A673 (cell line): ENCODE measurements at regions of chr10 and their contacts with region 1.

Region 1: DNA sequence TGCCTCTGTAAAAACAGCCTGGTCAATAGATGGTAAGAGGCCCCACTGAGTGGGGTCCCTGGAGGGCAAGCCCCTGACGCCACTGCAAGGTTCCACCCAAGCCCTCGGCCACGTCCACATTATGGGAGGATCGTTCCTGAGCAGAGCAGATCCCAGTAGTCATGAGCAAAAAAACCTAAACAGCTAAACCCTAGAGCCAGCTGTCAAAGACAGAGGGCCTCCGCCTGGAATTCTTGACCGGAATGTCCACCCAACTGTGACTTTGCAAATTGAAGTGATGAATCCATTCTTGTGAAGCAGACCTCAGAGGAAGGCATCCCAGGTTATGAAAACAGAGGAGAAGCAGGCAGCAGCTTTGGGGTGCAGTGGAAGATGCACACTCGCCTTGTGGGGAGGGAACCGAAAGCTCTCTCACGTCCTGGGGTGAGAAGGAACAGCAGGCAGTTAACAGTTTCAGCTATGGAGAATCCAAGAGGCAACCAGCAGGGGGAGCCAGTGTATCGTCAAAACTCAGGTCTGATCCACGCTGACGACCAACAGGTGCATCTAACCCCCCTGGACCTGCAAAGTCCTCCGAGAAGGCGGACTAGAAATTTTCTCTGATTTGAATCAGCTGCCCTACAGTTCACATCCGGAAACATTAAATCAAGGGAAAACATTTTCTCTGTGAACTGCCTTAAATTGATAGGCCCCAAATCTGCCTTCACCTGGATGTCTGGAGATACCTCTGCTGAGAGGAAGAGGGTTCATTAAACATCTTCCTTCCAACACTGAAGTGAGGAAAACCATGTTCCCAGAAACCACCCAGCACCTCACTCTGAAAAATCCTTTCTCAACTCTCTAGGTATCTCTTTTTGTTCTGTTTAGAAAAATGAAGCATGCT is 139.1 kb upstream of the PFKP start:
- DNase-seq: peak; percentile 72
- H3K4me3 ChIP-seq: no peak overlapping the region
- H3K27ac ChIP-seq: no peak overlapping the region
- H3K4me1 ChIP-seq: peaks cover 32% of the 10 kb centered on the region
- H3K27me3 ChIP-seq: no peaks in the 10 kb centered on the region
- CTCF ChIP-seq: peak; percentile 86

Region 2: DNA sequence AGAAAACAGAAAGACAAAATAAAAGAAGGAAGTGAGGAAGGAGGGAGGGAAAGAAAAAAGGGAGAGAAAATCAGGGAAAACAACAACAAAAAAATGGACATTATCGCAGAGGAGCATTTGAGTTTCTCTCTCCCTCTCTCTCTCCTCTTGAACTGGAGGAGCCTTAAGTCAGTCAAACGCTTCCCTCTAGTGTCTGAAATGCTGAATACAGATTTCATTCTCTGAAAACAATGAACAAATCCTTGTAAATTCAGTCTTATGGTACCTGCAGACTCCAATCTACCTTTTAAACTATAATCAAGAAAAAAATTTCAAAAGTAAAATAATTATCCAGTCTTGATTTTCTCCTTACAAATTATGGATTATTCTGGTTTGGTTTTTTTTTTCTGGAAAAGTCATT is 49.9 kb after region 1 on chr10:
- CTCF ChIA-PET with region 1: interaction called, 4 read pairs
- POLR2A ChIA-PET with region 1: no interaction called
- intact Hi-C with region 1: loop called (anchors 2 kb)
- DNase-seq: peak; percentile 79
- H3K4me3 ChIP-seq: no peak overlapping the region
- H3K27ac ChIP-seq: no peak overlapping the region
- H3K4me1 ChIP-seq: no peaks in the 10 kb centered on the region
- H3K27me3 ChIP-seq: no peaks in the 10 kb centered on the region
- CTCF ChIP-seq: peak; percentile 74

Region 3: GRCh38 chr10:3043512-3044368 is 115.5 kb after region 1 on chr10:
- CTCF ChIA-PET with region 1: interaction called, 4 read pairs
- POLR2A ChIA-PET with region 1: no interaction called
- intact Hi-C with region 1: loop called (anchors 1 kb)
- DNase-seq: peak; percentile 90
- H3K4me3 ChIP-seq: no peak overlapping the region
- H3K27ac ChIP-seq: no peak overlapping the region
- H3K4me1 ChIP-seq: no peaks in the 10 kb centered on the region
- H3K27me3 ChIP-seq: no peaks in the 10 kb centered on the region
- CTCF ChIP-seq: peak; percentile 88